PC-3 (cell line): ENCODE measurements at regions of chr3 and their contacts with region 1.

Region 1: DNA sequence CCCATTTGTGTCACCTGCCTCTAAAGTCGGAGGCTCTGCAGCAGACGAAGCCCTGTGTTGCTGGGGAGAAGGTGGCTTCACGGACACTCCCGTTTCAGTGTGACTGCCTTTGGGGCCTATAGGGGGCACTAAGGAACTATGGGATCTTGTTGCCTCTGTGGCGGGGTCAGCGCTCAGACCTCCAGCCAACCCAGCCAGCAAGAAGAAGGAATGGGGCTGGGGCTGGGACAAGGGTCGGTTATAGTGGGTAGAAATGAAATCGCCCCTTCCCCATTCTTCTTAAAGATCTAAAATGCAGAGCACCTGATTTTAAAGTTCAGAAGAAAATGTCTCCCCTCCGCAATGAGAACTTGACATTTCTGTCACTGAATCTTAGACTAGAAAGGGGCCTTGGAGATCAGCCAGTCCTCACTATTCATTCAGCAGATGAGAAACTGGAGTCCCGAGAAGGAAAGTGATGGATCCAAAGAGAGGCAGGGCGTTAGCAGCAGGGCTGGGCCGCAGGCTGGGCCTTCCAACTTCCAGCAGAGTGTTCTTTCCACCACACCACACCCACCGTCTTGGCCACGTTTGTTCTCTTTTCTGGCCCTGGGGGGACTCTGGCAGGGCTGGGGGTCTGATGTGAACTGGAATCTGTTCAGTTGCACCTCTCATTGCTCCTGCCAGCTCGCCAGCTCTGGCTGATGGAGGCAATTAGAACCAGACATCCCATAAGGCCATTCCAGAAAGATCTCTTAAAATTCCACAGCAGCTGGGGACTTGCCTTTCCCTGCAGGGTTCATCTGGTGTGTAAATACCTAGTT is 195.4 kb downstream of the OPA1 start:
- DNase-seq: peak; percentile 75
- ATAC-seq: peak; percentile 82
- H3K4me3 ChIP-seq: no peak overlapping the region
- H3K27ac ChIP-seq: no peak overlapping the region
- H3K4me1 ChIP-seq: peaks cover 28% of the 10 kb centered on the region
- H3K27me3 ChIP-seq: no peaks in the 10 kb centered on the region
- CTCF ChIP-seq: peak; percentile 90

Region 2: DNA sequence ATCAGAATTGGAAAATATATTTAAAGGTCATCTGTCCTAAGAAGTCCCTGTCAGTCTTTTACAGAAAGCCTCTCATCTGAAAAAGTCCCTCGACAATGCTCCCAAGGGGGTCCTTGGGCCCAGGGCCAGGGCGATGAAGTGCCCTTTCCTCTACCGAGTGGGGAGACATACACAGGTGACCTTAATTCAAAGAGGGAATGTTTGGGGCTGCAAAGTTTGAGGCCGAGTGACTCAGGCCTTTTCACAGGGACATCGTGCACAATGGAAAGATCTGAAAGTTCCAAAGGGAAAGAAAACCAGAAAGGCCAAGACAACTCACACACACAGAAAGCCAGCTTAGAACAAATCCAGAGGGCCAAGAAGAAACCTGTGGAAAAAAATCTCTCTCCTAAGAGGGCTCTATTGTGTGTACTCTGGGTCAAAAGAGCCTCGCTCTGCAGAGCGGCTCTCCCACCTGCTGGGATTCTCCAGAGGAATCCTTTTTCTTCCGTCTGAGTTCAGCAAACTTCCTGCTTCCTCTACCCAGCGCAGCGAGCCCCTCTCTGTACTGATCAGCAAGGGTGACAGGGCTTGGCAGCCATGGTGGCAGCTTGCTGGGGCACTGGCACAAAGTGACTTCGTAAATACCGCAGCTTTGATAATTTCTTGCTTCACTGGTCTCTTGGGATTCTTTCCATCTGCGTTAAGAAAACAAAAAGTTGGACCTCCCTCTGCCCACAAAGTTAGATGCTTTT is 63.7 kb after region 1 on chr3:
- CTCF ChIA-PET with region 1: no interaction called
- POLR2A ChIA-PET with region 1: interaction called, 16 read pairs
- intact Hi-C with region 1: no loop called
- DNase-seq: peak; percentile 31
- ATAC-seq: peak; percentile 57
- H3K4me3 ChIP-seq: peak overlapping the region; percentile 6; the same call in 1 of the 2 replicates
- H3K27ac ChIP-seq: peak overlapping the region; percentile 73
- H3K4me1 ChIP-seq: peaks cover 35% of the 10 kb centered on the region
- H3K27me3 ChIP-seq: no peaks in the 10 kb centered on the region
- CTCF ChIP-seq: no peak